ENCODE measurements at regions of chr11 and their contacts with region 1.

Region 1: DNA sequence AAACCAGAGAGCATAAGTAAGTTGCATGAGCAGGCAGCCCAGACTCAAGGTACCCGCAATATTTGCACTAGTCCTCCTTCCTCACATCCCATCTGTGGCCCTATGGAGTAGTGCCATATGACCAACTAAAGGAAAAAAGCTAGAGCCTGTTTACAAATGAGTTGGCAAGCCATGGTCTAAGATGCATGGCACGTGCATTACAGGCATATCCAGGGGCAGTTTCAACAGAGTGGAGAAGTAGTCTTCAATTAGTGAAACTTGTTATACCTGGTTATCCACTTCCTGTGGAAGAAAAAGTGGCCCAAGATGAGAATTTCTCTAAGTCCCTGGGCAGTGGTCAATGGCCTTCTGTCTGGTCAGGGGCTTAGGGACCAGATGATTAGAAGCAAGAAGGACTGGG is 11.7 kb downstream of the OR52M1 start:
- DNase-seq: no peak
- ATAC-seq: no peak
- H3K4me3 ChIP-seq: no peak overlapping the region
- H3K4me3 Mint-ChIP-seq: no peak overlapping the region
- H3K27ac ChIP-seq: no peak overlapping the region
- H3K27ac Mint-ChIP-seq: no peak overlapping the region
- H3K4me1 ChIP-seq: no peaks in the 10 kb centered on the region
- H3K4me1 Mint-ChIP-seq: no peaks in the 10 kb centered on the region
- H3K27me3 ChIP-seq: peaks cover 0 to 20% of the 10 kb centered on the region in 2 experiments
- H3K27me3 Mint-ChIP-seq: peaks cover 23 to 33% of the 10 kb centered on the region in 2 donors

Region 2: GRCh38 chr11:4605057-4605456 is 48.4 kb after region 1 on chr11:
- CTCF ChIA-PET with region 1: no interaction called
- POLR2A ChIA-PET with region 1: no interaction called
- DNase-seq: no peak
- ATAC-seq: no peak
- H3K4me3 ChIP-seq: no peak overlapping the region
- H3K4me3 Mint-ChIP-seq: no peak overlapping the region
- H3K27ac ChIP-seq: no peak overlapping the region
- H3K27ac Mint-ChIP-seq: no peak overlapping the region
- H3K4me1 ChIP-seq: peaks cover 11 to 13% of the 10 kb centered on the region in 2 experiments
- H3K4me1 Mint-ChIP-seq: peaks cover 42 to 52% (median 44%) of the 10 kb centered on the region in 3 donors
- H3K27me3 ChIP-seq: no peaks in the 10 kb centered on the region
- H3K27me3 Mint-ChIP-seq: no peaks in the 10 kb centered on the region

Region 3: DNA sequence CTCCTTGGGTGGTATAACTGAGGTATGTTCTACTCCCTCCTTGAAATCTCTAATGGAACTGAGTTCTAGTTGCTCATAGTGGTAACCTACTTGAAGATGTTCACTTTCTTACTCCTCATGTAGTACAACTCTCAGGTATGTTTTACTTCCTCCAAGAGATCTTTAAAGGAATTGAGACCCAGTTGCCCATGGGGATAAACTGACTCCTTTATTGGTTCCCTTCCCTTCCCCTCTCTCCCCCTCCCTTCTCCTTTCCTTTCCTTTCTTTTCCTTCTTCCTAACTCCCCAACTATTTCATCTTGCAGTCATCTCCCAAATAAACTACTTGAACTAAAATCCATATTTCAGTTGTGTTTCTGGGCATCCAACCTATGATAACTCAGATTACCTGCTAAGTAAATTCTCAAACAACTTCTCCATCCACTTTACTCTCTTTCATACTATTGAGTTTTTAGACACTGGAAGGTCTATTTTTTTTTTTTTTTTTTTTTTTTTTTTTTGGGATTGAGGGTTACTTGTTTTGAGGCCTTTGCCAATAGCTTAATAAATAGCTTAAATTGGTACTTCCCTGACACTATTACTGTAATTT is 59.3 kb after region 1 on chr11:
- CTCF ChIA-PET with region 1: no interaction called
- POLR2A ChIA-PET with region 1: interaction called in 1 of 2 experiments, 10 read pairs
- DNase-seq: no peak
- ATAC-seq: no peak
- H3K4me3 ChIP-seq: no peak overlapping the region
- H3K4me3 Mint-ChIP-seq: no peak overlapping the region
- H3K27ac ChIP-seq: no peak overlapping the region
- H3K27ac Mint-ChIP-seq: no peak overlapping the region
- H3K4me1 ChIP-seq: no peaks in the 10 kb centered on the region
- H3K4me1 Mint-ChIP-seq: no peaks in the 10 kb centered on the region
- H3K27me3 ChIP-seq: peaks cover 0 to 3% of the 10 kb centered on the region in 2 experiments
- H3K27me3 Mint-ChIP-seq: peaks cover 16 to 22% of the 10 kb centered on the region in 2 donors

Region 4: GRCh38 chr11:4763096-4763495 is 206.4 kb after region 1 on chr11:
- CTCF ChIA-PET with region 1: no interaction called
- POLR2A ChIA-PET with region 1: no interaction called
- DNase-seq: no peak
- ATAC-seq: no peak
- H3K4me3 ChIP-seq: no peak overlapping the region
- H3K4me3 Mint-ChIP-seq: no peak overlapping the region
- H3K27ac ChIP-seq: no peak overlapping the region
- H3K27ac Mint-ChIP-seq: no peak overlapping the region
- H3K4me1 ChIP-seq: no peaks in the 10 kb centered on the region
- H3K4me1 Mint-ChIP-seq: no peaks in the 10 kb centered on the region
- H3K27me3 ChIP-seq: no peaks in the 10 kb centered on the region
- H3K27me3 Mint-ChIP-seq: no peaks in the 10 kb centered on the region

Measured in T-cell (primary cell).